Heart right ventricle (tissue), 16 donors: ENCODE measurements at regions of chr6 and their contacts with region 1.

Region 1: GRCh38 chr6:148464319-148465010 is 121.8 kb downstream of the SASH1 start:
- DNase-seq: peak; percentile 48 to 77
- ATAC-seq: peak; percentile 67 to 82 (median 76)
- H3K4me3 ChIP-seq: no peak overlapping the region
- H3K27ac ChIP-seq: peak overlapping the region in 7 of 10 donors; percentile 0 to 82 (median 51)
- H3K4me1 ChIP-seq: peaks cover 9 to 78% (median 53%) of the 10 kb centered on the region in 9 donors
- H3K27me3 ChIP-seq: no peaks in the 10 kb centered on the region
- CTCF ChIP-seq: peak; percentile 68 to 99 (median 94)

Region 2: GRCh38 chr6:147506704-147507114 is 957.8 kb before region 1 on chr6:
- intact Hi-C with region 1: loop called in 1 of 10 experiments (anchors 10 kb)
- DNase-seq: peak; percentile 66 to 79
- ATAC-seq: peak; percentile 63 to 87 (median 84)
- H3K4me3 ChIP-seq: peak overlapping the region; percentile 56 to 86 (median 70)
- H3K27ac ChIP-seq: no peak overlapping the region
- H3K4me1 ChIP-seq: peaks cover 0 to 33% (median 16%) of the 10 kb centered on the region in 9 donors
- H3K27me3 ChIP-seq: peaks cover 0 to 88% (median 37%) of the 10 kb centered on the region in 7 donors
- CTCF ChIP-seq: peak; percentile 72 to 92 (median 86)

Region 3: GRCh38 chr6:148177589-148178233 is 286.8 kb before region 1 on chr6:
- intact Hi-C with region 1: loop called (anchors 1 to 5 kb)
- DNase-seq: peak; percentile 71 to 75
- ATAC-seq: peak in 7 of 8 donors; percentile 37 to 68 (median 58)
- H3K4me3 ChIP-seq: no peak overlapping the region
- H3K27ac ChIP-seq: no peak overlapping the region
- H3K4me1 ChIP-seq: no peaks in the 10 kb centered on the region
- H3K27me3 ChIP-seq: no peaks in the 10 kb centered on the region
- CTCF ChIP-seq: peak; percentile 80 to 91 (median 86)

Region 4: DNA sequence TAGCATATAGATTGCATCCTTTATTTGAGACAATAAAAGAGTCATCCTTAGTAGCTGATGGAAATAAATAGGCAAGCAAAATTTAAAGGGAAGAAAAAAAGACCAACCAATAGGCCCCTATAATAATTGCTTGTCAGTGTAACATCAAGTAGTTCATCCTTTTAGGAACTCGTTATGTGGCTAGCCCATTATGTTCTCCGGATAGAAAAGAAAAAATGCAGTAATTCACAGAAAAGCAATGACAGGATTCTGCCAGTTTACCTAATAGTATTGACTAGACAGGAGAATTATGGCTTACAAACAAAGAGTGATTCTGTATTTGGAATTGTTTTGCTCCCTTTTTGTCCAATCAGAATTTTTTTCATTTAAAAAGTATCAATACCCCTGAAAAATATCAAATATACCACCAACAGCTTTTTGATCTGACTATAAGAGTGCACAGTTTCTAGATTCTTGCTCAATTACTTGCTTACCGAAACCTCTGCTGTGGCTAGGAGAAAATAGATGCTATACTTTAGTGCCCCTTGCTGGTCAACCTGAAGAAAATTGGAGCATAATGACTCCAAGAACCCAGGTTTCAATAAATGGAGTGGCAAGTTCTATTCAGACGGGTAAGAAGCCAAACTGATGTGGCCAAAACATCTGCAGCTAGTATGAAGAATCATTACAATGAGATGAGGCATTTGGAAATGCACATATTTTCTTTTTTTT is 213.3 kb before region 1 on chr6:
- intact Hi-C with region 1: loop called in 3 of 10 experiments (anchors 5 to 10 kb)
- DNase-seq: no peak
- ATAC-seq: peak in 6 of 8 donors; percentile 69 to 85 (median 80)
- H3K4me3 ChIP-seq: no peak overlapping the region
- H3K27ac ChIP-seq: peak overlapping the region in 3 of 10 donors; percentile 6 to 50 (median 9)
- H3K4me1 ChIP-seq: peaks cover 0 to 18% (median 4%) of the 10 kb centered on the region in 9 donors
- H3K27me3 ChIP-seq: no peaks in the 10 kb centered on the region
- CTCF ChIP-seq: peak in 8 of 9 donors; percentile 17 to 60 (median 50)

Region 5: GRCh38 chr6:148271711-148272439 is 192.6 kb before region 1 on chr6:
- intact Hi-C with region 1: loop called in 3 of 10 experiments (anchors 10 kb)
- DNase-seq: no peak
- ATAC-seq: peak in 7 of 8 donors; percentile 42 to 73 (median 61)
- H3K4me3 ChIP-seq: peak overlapping the region in 8 of 10 donors; percentile 1 to 41 (median 40)
- H3K27ac ChIP-seq: peak overlapping the region in 8 of 10 donors; percentile 20 to 72 (median 44)
- H3K4me1 ChIP-seq: peaks cover 0 to 17% (median 0%) of the 10 kb centered on the region in 9 donors
- H3K27me3 ChIP-seq: no peaks in the 10 kb centered on the region
- CTCF ChIP-seq: no peak

Region 6: DNA sequence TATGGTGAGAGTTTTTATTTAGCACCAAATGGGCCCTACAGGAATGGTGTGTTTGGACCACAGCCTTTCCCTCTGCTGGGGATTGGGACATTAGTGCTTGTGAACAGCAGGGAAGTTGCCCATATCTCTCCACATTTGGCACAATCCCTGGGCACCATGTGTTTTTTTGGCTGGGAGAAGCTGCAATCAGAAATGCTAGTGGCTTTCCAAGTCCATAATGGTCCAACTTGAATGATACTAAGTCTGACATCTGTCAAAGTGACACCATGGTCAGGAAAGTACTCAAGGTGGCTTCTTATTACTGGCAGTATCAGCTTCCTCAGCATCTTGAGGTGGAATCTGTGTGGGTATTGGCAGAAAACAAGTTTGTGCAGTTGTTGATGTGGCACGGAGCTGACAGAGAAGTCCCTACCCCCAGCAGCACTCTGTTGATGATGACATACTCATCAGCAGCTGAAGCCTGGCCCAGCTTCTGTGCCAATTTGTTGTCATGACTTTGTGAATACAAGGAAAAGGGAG is 68.8 kb before region 1 on chr6:
- intact Hi-C with region 1: loop called in 1 of 10 experiments (anchors 5 kb)
- DNase-seq: peak in 1 of 2 donors; percentile 48
- ATAC-seq: peak; percentile 50 to 87 (median 72)
- H3K4me3 ChIP-seq: no peak overlapping the region
- H3K27ac ChIP-seq: peak overlapping the region in 8 of 10 donors; percentile 21 to 85 (median 56)
- H3K4me1 ChIP-seq: peaks cover 4 to 80% (median 58%) of the 10 kb centered on the region in 9 donors
- H3K27me3 ChIP-seq: no peaks in the 10 kb centered on the region
- CTCF ChIP-seq: no peak

Region 7: GRCh38 chr6:148509800-148510581 is 45.5 kb after region 1 on chr6:
- intact Hi-C with region 1: loop called in 1 of 10 experiments (anchors 5 kb)
- DNase-seq: peak; percentile 56 to 60
- ATAC-seq: peak in 7 of 8 donors; percentile 45 to 70 (median 54)
- H3K4me3 ChIP-seq: peak overlapping the region; percentile 27 to 59 (median 50)
- H3K27ac ChIP-seq: peak overlapping the region; percentile 67 to 88 (median 84)
- H3K4me1 ChIP-seq: peaks cover 0 to 73% (median 41%) of the 10 kb centered on the region in 9 donors
- H3K27me3 ChIP-seq: no peaks in the 10 kb centered on the region
- CTCF ChIP-seq: no peak

Region 8: DNA sequence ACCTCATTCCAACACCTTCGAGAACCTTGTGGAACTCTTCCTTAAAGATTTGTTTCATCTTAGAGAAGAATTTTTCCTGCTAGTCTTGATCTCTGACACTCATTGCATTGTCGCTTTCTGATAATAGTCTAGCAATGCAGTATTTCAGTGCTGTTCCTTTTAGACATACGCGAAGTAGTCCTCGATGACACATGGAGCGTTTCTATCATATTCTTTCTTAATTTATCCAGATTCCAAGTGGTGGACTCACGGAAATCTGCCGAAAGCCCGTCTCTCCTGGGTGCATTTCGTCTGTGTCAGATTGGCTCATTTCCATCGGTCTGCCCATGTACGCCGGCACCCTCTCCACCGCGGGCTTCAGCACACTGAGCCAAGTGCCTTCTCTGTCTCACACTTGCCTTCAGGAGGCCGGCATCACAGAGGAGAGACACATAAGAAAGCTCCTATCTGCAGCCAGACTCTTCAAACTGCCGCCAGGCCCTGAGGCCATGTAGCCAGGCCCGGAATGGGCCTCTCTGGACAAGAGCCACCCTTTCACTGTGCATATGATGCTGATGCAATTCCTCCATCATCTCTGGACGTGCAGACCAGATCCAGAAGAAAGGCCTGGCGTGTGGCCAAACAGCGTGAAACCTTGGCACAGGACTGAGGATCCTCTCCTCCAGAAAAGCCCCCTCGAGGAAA is 83.7 kb after region 1 on chr6:
- intact Hi-C with region 1: no loop called
- DNase-seq: peak in 1 of 2 donors; percentile 65
- ATAC-seq: peak in 5 of 8 donors; percentile 29 to 72 (median 38)
- H3K4me3 ChIP-seq: no peak overlapping the region
- H3K27ac ChIP-seq: peak overlapping the region in 3 of 10 donors; percentile 6 to 30 (median 17)
- H3K4me1 ChIP-seq: peaks cover 3 to 27% (median 16%) of the 10 kb centered on the region in 9 donors
- H3K27me3 ChIP-seq: no peaks in the 10 kb centered on the region
- CTCF ChIP-seq: no peak